Calu3 (cell line): ENCODE measurements at regions of chr12 and their contacts with region 1.

Region 1: DNA sequence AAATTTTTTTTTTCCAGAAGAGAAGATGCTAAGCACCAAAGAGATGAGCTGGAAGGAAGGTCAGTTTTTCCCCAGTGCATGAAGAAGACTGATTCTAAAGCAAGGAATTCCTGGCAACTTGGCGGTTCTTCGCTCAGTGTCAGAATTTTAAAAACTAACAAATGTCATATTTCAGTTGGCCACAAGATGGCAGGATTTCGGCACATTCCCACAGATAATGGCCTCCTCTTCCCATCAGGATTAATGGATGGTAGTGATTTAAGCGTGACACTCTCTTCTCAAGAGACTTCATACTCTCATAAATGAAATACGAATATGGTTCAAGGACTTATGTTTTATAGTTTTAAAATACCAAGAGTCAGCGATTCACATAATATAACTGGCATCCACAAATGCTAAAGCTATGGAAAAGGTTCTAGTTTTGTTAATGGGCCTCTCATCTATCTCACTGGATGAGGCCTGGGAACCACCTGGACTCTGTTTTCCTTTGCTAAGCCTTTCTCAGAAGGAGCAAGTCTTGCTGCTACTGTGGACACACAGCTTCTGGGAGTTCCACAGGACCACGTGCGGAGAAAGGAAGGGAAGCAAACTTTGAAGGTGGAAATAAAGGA is 46.1 kb upstream of the PTPRO start:
- DNase-seq: peak; percentile 41
- H3K4me3 Mint-ChIP-seq: no peak overlapping the region
- H3K27ac Mint-ChIP-seq: no peak overlapping the region
- H3K4me1 Mint-ChIP-seq: peaks cover 22% of the 10 kb centered on the region
- H3K27me3 Mint-ChIP-seq: no peaks in the 10 kb centered on the region
- CTCF ChIP-seq: peak; percentile 59

Region 2: GRCh38 chr12:14937689-14938088 is 338.5 kb before region 1 on chr12:
- CTCF ChIA-PET with region 1: no interaction called
- intact Hi-C with region 1: no loop called
- DNase-seq: no peak
- H3K4me3 Mint-ChIP-seq: no peak overlapping the region
- H3K27ac Mint-ChIP-seq: no peak overlapping the region
- H3K4me1 Mint-ChIP-seq: peaks cover 36% of the 10 kb centered on the region
- H3K27me3 Mint-ChIP-seq: no peaks in the 10 kb centered on the region
- CTCF ChIP-seq: peak; percentile 22

Region 3: GRCh38 chr12:15050659-15051058 is 225.5 kb before region 1 on chr12:
- CTCF ChIA-PET with region 1: no interaction called
- intact Hi-C with region 1: no loop called
- DNase-seq: no peak
- H3K4me3 Mint-ChIP-seq: no peak overlapping the region
- H3K27ac Mint-ChIP-seq: no peak overlapping the region
- H3K4me1 Mint-ChIP-seq: no peaks in the 10 kb centered on the region
- H3K27me3 Mint-ChIP-seq: no peaks in the 10 kb centered on the region
- CTCF ChIP-seq: no peak

Region 4: GRCh38 chr12:15265868-15266267 is 10.3 kb before region 1 on chr12:
- CTCF ChIA-PET with region 1: no interaction called
- intact Hi-C with region 1: no loop called
- DNase-seq: no peak
- H3K4me3 Mint-ChIP-seq: no peak overlapping the region
- H3K27ac Mint-ChIP-seq: peak overlapping the region; percentile 42
- H3K4me1 Mint-ChIP-seq: no peaks in the 10 kb centered on the region
- H3K27me3 Mint-ChIP-seq: no peaks in the 10 kb centered on the region
- CTCF ChIP-seq: no peak

Region 5: GRCh38 chr12:15322164-15323061 is 46.2 kb after region 1 on chr12 and contains the start of gene PTPRO:
- CTCF ChIA-PET with region 1: interaction called, 6 read pairs
- intact Hi-C with region 1: loop called (anchors 5 kb)
- DNase-seq: peak; percentile 50
- H3K4me3 Mint-ChIP-seq: peak within 1 kb of the TSS; percentile 50
- H3K27ac Mint-ChIP-seq: no peak within 1 kb of the TSS
- H3K4me1 Mint-ChIP-seq: no peaks in the 10 kb centered on the region
- H3K27me3 Mint-ChIP-seq: peaks cover 49% of the 10 kb centered on the region
- CTCF ChIP-seq: no peak
- total RNA-seq, gene PTPRO: 0.24 TPM in 1 of 2 replicates, not detected in the other

Region 6: DNA sequence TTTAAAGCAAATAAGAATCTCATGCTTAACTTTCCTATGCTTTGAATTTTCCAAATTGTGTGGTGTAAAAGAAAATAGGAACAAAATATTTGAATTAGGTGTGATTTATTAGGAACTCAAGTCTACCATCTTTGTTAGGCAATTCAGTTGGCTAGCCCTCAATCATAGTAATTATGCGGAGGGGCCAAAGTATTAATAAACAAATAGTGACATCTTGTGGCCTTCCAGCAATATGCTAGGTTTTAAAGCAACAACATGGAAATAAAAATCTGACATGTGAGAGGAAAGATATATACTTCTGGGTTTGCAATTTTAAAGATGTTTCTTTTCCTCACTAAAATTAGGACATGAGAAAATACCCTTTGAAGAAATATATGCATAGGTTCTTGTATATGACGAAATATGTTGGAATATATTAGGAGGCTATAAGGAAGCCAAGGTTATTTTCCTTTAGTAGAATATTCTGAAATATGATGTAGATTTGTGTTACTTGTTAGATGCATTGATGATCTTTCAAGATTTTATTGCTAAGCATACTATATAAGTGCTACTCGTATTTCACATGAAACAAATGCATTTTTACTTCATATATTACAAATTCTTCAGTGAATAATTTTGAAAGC is 246.5 kb after region 1 on chr12:
- CTCF ChIA-PET with region 1: interaction called, 7 read pairs
- intact Hi-C with region 1: loop called (anchors 1 kb)
- DNase-seq: peak; percentile 21
- H3K4me3 Mint-ChIP-seq: no peak overlapping the region
- H3K27ac Mint-ChIP-seq: no peak overlapping the region
- H3K4me1 Mint-ChIP-seq: peaks cover 19% of the 10 kb centered on the region
- H3K27me3 Mint-ChIP-seq: peaks cover 20% of the 10 kb centered on the region
- CTCF ChIP-seq: peak; percentile 40

Region 7: GRCh38 chr12:15882118-15882971 is 606.2 kb after region 1 on chr12 and contains the start of gene STRAP:
- CTCF ChIA-PET with region 1: no interaction called
- intact Hi-C with region 1: loop called (anchors 10 kb)
- DNase-seq: peak; percentile 95
- H3K4me3 Mint-ChIP-seq: peak within 1 kb of the TSS; percentile 79
- H3K27ac Mint-ChIP-seq: peak within 1 kb of the TSS; percentile 99
- H3K4me1 Mint-ChIP-seq: peaks cover 45% of the 10 kb centered on the region
- H3K27me3 Mint-ChIP-seq: no peaks in the 10 kb centered on the region
- CTCF ChIP-seq: no peak
- total RNA-seq, gene STRAP: 119 and 124 TPM in 2 replicates